ENCODE measurements at regions of chr10 and their contacts with region 1.

Region 1: DNA sequence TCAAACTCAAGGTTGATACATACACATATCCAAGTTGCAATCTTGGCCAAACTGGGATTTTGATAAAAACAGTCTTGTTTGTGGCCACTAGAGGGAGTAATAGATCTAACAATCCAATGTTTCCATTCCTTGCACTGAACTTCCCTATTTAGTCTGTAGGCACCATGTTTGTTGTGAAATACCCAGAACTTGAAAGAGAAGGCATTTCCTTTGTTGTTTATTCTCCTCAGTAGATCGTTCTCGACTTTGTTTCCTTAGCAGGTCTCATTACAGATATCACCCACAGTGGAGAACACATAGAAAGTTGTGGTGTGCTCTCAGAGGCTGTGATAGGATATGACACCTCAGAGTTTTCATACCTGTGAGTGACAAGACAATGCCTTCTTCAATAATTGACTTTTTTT is 70.3 kb upstream of the MXI1 start:
- DNase-seq: peak; percentile 72
- ATAC-seq: peak; percentile 55
- H3K4me3 ChIP-seq: no peak overlapping the region
- H3K27ac ChIP-seq: no peak overlapping the region
- H3K4me1 ChIP-seq: no peaks in the 10 kb centered on the region
- H3K27me3 ChIP-seq: no peaks in the 10 kb centered on the region
- CTCF ChIP-seq: peak; percentile 85

Region 2: DNA sequence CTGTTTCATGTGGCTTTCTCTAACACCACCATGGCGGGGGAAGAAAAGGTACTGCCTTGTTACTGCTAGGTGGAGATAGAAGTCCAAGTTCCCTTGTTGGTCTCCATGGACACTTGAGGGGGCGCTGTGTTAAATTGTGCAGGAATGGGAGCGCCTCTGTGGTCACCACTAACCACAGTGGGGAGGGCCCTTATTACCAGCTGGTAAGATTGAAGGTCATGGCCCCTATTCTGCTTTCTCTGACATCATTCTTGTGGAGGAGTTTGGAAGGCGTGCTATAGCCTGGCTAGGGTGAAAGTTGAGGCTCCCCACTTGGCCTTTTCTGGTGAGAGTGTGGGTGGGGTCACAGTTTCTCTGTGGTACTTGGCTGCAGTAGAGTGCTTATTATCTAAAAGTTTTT is 55.4 kb after region 1 on chr10:
- CTCF ChIA-PET with region 1: no interaction called
- POLR2A ChIA-PET with region 1: no interaction called
- intact Hi-C with region 1: no loop called
- DNase-seq: no peak
- ATAC-seq: no peak
- H3K4me3 ChIP-seq: no peak overlapping the region
- H3K27ac ChIP-seq: no peak overlapping the region
- H3K4me1 ChIP-seq: no peaks in the 10 kb centered on the region
- H3K27me3 ChIP-seq: no peaks in the 10 kb centered on the region
- CTCF ChIP-seq: peak; percentile 13; the same call in 1 of the 2 replicates

Region 3: GRCh38 chr10:110279407-110279986 is 142.4 kb after region 1 on chr10:
- CTCF ChIA-PET with region 1: no interaction called
- POLR2A ChIA-PET with region 1: no interaction called
- intact Hi-C with region 1: loop called (anchors 1 kb)
- DNase-seq: peak; percentile 62
- ATAC-seq: peak; percentile 63
- H3K4me3 ChIP-seq: 0 out of 2 replicates have a peak overlapping the region, but pooled peaks have one; percentile 32
- H3K27ac ChIP-seq: no peak overlapping the region
- H3K4me1 ChIP-seq: no peaks in the 10 kb centered on the region
- H3K27me3 ChIP-seq: no peaks in the 10 kb centered on the region
- CTCF ChIP-seq: peak; percentile 75